Prostate gland (tissue), 2 donors: ENCODE measurements at regions of chr2 and their contacts with region 1.

Region 1: DNA sequence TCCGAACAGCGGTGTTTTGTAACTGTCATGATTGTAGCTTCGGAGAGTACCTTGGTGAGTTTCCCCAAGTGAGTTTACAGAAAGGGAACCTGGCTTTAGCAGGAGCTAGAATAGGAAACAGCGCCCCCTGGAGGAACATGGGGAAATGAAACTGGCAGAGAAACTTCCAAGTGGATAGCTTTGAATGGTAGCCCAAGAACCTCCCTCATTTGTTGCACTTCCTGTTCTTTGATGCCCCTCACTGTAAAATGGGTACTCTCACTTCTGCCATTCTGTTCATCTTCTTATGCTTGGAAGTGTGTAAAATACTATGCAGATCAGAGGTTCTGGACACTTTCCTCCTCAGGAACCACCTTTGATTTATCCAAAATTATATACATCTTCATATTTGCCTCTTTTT is 36.2 kb downstream of the CHST10 start:
- DNase-seq: peak; percentile 69
- H3K4me3 ChIP-seq: no peak overlapping the region
- H3K27ac ChIP-seq: no peak overlapping the region
- H3K4me1 ChIP-seq: no peaks in the 10 kb centered on the region
- H3K27me3 ChIP-seq: no peaks in the 10 kb centered on the region
- CTCF ChIP-seq: peak; percentile 78 to 91 (median 86)
- POLR2A ChIP-seq: no peak

Region 2: DNA sequence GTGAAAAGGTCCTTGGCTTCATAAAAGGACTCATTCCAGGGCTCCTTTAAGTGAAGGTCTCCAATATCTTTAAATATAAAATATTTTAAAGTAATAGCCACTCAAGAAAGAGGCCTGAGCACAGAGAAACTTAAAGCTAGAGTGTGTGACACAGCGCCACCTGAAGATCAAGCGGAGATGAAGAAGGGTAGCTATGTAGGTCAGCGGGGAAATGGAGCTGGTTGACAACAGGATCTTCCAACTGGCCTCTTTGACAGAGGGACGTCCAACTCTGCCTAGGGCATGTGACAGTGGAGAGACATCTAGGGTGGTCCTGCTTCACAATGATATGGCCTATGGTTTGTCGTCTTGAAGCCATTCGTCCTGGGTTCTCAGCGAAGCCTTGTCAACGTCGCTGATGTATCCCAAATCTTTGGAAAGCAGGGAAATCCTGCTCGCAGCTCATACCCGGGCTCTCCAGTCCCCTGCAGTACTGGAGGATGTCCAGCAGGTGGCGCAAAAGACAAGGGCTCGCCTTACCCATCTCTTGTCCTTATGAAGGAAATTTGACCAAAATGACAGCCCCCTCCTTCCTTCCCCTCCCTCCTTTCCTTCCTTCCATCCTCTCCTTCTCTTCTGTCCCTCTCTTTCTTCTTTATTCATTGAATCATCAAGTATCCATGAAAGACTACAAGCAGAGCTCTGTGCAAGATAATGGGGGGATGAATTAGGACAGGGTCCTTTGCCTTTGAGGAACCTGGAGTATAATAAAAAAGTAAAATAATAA is 118.5 kb before region 1 on chr2:
- intact Hi-C with region 1: loop called (anchors 2 kb)
- DNase-seq: peak; percentile 29
- H3K4me3 ChIP-seq: no peak overlapping the region
- H3K27ac ChIP-seq: no peak overlapping the region
- H3K4me1 ChIP-seq: no peaks in the 10 kb centered on the region
- H3K27me3 ChIP-seq: no peaks in the 10 kb centered on the region
- CTCF ChIP-seq: peak; percentile 89 to 98 (median 92)
- POLR2A ChIP-seq: no peak

Region 3: DNA sequence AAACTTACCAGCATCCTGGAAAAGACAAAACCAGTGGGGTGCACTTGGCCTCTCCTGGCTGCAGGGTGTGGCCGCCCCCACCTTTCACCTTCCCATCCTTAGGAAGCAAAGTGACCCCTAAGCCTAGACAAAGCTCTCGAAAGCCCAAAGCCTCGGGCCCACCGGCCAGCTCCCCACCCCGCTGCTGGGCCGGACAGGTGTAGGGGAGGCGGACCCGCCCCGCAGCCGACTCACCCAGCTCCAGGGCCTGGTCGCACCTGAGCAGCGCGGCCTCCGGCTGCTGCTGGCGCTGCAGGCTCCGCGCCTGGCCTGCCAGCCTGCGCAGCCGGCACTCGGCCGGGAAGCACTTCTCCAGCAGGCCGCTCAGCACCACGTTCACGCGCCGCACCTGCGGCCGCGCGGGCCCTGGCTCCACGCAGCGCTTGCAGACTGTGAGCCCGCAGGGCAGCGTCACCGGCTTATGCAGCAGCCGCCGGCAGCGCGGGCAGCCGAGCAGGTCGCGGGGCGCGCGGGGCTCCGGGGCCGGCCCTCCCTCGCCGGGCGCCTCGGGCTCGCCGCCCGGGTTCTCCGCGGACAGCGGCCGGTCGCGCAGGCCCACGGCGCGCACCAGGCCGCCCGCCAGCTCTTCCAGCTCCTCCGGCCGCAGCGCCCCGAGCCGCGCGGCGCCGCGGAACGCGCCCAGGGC is 59.9 kb before region 1 on chr2:
- intact Hi-C with region 1: loop called (anchors 10 kb)
- DNase-seq: peak; percentile 26
- H3K4me3 ChIP-seq: peak overlapping the region; percentile 60 to 69
- H3K27ac ChIP-seq: peak overlapping the region; percentile 83 to 84
- H3K4me1 ChIP-seq: no peaks in the 10 kb centered on the region
- H3K27me3 ChIP-seq: no peaks in the 10 kb centered on the region
- CTCF ChIP-seq: peak in 2 of 4 experiments; percentile 31 to 45
- POLR2A ChIP-seq: no peak